ENCODE measurements at regions of chr5 and their contacts with region 1.

Region 1: GRCh38 chr5:170267431-170268152 is 30.0 kb downstream of the LCP2 start:
- DNase-seq: peak; percentile 1
- H3K4me3 ChIP-seq: no peak overlapping the region
- CTCF ChIP-seq: peak; percentile 84

Region 2: GRCh38 chr5:170225326-170226128 is 42.1 kb before region 1 on chr5:
- CTCF ChIA-PET with region 1: interaction called, 23 read pairs
- POLR2A ChIA-PET with region 1: no interaction called
- DNase-seq: no peak
- H3K4me3 ChIP-seq: no peak overlapping the region
- CTCF ChIP-seq: peak; percentile 66

Region 3: GRCh38 chr5:170247363-170247762 is 20.2 kb before region 1 on chr5:
- CTCF ChIA-PET with region 1: interaction called, 12 read pairs
- POLR2A ChIA-PET with region 1: no interaction called
- DNase-seq: no peak
- H3K4me3 ChIP-seq: no peak overlapping the region
- CTCF ChIP-seq: no peak

Region 4: DNA sequence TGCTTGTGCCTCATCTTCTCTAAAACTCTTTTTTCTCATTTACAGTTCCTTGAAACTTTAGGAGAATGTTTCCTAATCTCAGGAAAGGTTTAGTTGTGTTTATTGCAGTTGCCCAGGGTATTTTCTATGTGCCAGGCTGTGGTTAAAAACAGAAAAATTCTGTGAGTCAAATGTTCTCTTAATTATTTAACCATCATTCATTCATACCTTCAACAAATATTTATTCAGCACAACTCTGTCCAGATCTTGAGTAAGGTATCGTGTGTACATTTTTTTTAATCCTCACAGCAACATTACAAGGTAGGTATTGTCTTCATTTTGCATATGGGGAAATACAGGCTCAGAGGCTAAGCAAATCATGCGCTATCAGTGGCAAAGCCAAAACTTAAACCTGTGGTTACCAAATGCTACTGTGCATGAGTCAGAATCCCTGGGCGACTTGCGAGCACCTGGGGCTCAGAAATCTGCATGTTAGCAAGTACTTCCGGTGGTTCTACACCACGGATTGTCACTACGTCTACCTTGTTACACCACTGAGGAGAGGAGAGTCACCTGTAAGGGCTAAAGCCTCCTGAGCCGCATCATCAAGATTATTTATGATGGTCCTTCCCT is 13.6 kb before region 1 on chr5:
- CTCF ChIA-PET with region 1: interaction called, 15 read pairs
- POLR2A ChIA-PET with region 1: no interaction called
- DNase-seq: no peak
- H3K4me3 ChIP-seq: no peak overlapping the region
- CTCF ChIP-seq: no peak

Region 5: DNA sequence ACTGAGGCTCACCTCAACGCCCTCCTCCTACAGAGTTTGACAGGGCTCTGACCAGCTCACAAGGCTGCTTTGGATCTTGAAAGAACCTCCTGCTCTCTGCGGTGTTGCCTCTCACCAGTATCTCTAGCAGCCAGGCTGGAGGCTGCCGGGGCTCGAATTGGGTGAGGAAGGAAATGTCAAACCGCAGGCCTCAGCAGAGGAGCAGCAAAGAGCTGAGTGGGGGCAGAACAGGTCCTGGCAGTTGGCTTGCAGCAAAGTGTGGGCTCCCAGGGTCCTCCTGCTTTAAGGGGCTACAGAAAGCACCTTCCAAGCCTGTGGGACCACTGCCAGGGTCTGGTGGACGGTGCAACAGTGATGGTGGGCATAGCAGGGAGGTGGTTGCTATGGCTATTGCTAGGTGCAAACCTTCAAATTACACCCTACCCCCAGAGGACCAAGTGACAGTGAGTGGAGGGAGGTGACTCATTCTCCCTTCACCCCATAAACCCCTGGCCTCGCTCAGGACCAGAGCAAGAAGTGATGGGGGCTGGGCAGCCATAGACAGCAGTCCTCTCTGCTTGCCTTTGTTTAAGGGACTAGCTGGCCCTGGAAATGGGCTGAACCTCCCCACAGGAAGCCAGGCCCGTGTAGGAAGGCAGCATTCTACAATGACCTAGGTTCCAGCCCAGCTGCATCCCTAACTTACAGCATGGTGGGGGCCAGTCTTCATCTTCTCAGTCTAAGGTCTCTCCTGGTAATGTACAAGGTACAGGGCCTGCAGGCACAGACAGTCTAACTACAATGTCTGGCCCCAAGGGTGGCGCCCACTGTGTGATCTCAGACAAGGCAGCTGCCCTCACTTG is 11.2 kb after region 1 on chr5:
- CTCF ChIA-PET with region 1: interaction called, 11 read pairs
- POLR2A ChIA-PET with region 1: no interaction called
- DNase-seq: no peak
- H3K4me3 ChIP-seq: no peak overlapping the region
- CTCF ChIP-seq: no peak

Region 6: DNA sequence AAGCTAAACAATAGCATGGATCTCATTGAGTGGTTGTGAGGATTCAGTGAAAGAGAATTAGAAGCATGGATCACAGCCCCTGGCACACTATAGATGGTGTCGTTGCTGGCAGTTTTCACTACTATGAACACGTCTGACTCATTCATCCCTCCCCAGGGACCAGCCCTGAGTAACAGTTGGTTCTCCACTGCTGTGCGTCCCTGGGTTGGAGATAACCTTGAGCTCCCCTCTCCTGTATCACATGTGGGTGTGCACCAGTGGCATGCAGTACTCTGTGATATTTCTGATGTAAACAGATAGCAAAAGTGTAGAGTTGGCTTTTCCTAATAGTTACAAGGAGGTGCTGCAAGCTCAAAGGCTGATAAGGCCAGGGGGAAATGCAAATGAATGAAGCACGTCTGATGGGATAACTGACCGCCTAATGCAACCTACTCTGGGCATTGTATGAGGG is 38.8 kb after region 1 on chr5:
- CTCF ChIA-PET with region 1: no interaction called
- POLR2A ChIA-PET with region 1: no interaction called
- DNase-seq: no peak
- H3K4me3 ChIP-seq: no peak overlapping the region
- CTCF ChIP-seq: no peak

Region 7: GRCh38 chr5:170420780-170421412 is 153.3 kb after region 1 on chr5:
- CTCF ChIA-PET with region 1: interaction called, 26 read pairs
- POLR2A ChIA-PET with region 1: no interaction called
- DNase-seq: peak; percentile 5
- H3K4me3 ChIP-seq: no peak overlapping the region
- CTCF ChIP-seq: peak; percentile 72

Region 8: GRCh38 chr5:170623576-170624181 is 356.1 kb after region 1 on chr5:
- CTCF ChIA-PET with region 1: interaction called, 22 read pairs
- POLR2A ChIA-PET with region 1: no interaction called
- DNase-seq: peak; percentile 5
- H3K4me3 ChIP-seq: no peak overlapping the region
- CTCF ChIP-seq: peak; percentile 80

Measured in AG04449 (cell line).